Caki2 (cell line): ENCODE measurements at regions of chr9 and their contacts with region 1.

Region 1: DNA sequence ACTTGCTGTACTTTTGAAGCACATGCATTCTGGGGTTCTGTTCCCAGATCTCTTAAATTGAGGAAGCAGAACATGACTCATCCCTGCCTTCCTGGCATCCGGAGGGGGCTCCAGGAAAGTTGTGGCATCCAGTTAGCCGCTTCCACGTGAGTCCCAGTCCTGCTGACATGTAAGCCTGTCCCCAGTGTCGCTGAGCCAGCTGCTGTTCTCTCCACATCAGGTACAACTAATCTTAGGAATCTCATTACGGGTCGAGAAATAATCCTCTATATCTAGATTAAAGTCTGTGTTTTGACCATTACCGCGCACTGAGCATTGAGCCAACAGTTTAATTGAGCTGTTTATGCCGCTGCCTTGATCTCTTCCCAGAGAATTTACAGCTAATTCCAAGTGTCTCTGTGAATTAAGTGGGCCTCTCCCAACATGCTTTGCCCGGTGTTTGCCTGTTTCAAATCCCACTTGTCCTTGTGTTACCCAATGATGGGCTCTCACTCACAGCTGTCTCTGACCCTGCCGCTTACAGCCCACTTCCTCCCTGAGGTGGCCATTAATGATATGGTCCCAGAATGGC is 10.5 kb upstream of the SHB start:
- DNase-seq: no peak

Region 2: DNA sequence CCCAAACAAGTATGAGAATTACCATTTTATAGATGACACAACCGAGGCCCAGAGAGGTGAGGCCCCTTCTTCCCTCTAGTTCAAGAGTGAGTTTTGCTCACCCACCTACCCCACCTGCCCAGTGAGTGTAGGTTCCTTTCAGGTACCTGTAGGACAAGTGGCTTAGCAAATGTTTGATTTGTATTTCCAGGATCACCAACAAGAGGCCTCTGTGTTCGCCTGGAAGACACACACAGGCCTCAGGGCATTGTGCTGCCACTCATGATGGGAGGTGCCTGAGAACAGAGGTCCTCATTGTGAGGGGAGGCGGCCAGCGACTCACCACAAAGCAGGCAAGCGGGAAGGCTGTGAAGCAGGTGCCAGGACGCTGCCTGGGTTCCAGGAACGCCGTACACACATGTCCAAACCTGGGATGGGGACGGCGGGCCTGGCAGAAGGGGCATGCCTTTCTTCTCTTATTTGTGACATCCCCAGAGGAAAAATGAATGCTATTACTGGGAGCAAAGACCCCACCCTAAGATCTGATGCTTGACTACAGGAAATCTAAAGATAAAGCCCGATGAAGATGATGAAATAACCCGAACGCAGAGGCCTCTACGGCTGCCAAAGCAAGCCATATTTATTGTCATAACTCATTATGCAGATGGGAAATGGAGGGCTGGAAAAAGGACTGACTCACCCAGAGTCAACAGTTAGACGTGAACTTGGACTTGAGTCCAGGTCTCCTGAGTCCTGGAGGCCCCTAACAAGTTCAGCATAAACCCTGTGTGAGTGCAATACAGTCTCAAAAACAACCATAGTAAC is 115.4 kb before region 1 on chr9:
- in situ Hi-C with region 1: no loop called
- DNase-seq: peak; percentile 63

Region 3: GRCh38 chr9:38017149-38017884 is 62.2 kb before region 1 on chr9:
- in situ Hi-C with region 1: no loop called
- DNase-seq: peak; percentile 91

Region 4: GRCh38 chr9:38160613-38161215 is 81.2 kb after region 1 on chr9:
- in situ Hi-C with region 1: loop called (anchors 10 kb)
- DNase-seq: no peak